SK-N-SH (cell line): ENCODE measurements at regions of chr18 and their contacts with region 1.

Region 1: GRCh38 chr18:46281185-46282176 is 177.3 kb downstream of the HAUS1 start:
- DNase-seq: peak; percentile 74
- H3K4me3 ChIP-seq: no peak overlapping the region; a peak in 1 of 4 replicates
- H3K27ac ChIP-seq: no peak overlapping the region
- H3K4me1 ChIP-seq: peaks cover 12 to 21% of the 10 kb centered on the region in 2 experiments; a peak in 2 of 4 replicates
- H3K27me3 ChIP-seq: no peaks in the 10 kb centered on the region
- CTCF ChIP-seq: peak; percentile 78
- EP300 ChIP-seq: no peak
- RAD21 ChIP-seq: peak; percentile 94

Region 2: GRCh38 chr18:46173393-46174341 is 107.8 kb before region 1 on chr18:
- CTCF ChIA-PET with region 1: interaction called, 52 read pairs
- POLR2A ChIA-PET with region 1: no interaction called
- DNase-seq: peak; percentile 95
- H3K4me3 ChIP-seq: peak overlapping the region; percentile 77 to 98
- H3K27ac ChIP-seq: peak overlapping the region; percentile 85 to 92
- H3K4me1 ChIP-seq: peaks cover 7 to 14% of the 10 kb centered on the region in 2 experiments; a peak in 2 of 4 replicates
- H3K27me3 ChIP-seq: no peaks in the 10 kb centered on the region
- CTCF ChIP-seq: peak; percentile 91
- EP300 ChIP-seq: peak; percentile 22 to 43; a peak in 2 of 4 replicates
- RAD21 ChIP-seq: peak; percentile 77

Region 3: DNA sequence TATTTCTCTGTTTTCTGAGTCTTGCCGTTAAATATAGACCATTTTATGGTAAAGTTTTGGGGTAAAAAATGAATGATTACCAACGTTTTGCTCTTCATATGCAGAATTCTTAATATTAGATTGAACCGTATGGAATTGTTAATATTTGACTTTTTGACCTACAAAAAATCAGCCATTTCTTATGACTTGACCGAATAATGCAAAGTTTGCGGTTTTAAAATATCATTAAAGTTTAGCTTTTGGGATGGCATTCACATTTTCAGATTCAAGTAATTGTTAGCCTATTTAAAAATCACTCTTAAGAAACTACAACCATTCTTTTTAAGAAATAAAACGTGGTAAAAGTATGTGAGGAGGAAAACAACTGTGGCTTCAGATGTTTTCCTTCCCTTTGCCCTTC is 39.3 kb before region 1 on chr18:
- CTCF ChIA-PET with region 1: no interaction called
- POLR2A ChIA-PET with region 1: no interaction called
- DNase-seq: no peak
- H3K4me3 ChIP-seq: no peak overlapping the region
- H3K27ac ChIP-seq: no peak overlapping the region
- H3K4me1 ChIP-seq: peaks cover 0 to 13% of the 10 kb centered on the region in 2 experiments; a peak in 2 of 4 replicates
- H3K27me3 ChIP-seq: no peaks in the 10 kb centered on the region
- CTCF ChIP-seq: no peak
- EP300 ChIP-seq: no peak
- RAD21 ChIP-seq: no peak

Region 4: GRCh38 chr18:46352520-46353250 is 71.2 kb after region 1 on chr18:
- CTCF ChIA-PET with region 1: interaction called, 12 read pairs
- POLR2A ChIA-PET with region 1: interaction called, 3 read pairs
- DNase-seq: no peak
- H3K4me3 ChIP-seq: no peak overlapping the region
- H3K27ac ChIP-seq: no peak overlapping the region
- H3K4me1 ChIP-seq: peaks cover 0 to 51% of the 10 kb centered on the region in 2 experiments; a peak in 2 of 4 replicates
- H3K27me3 ChIP-seq: no peaks in the 10 kb centered on the region
- CTCF ChIP-seq: no peak
- EP300 ChIP-seq: no peak
- RAD21 ChIP-seq: no peak

Region 5: GRCh38 chr18:46437061-46437460 is 155.6 kb after region 1 on chr18:
- CTCF ChIA-PET with region 1: interaction called, 11 read pairs
- POLR2A ChIA-PET with region 1: no interaction called
- DNase-seq: peak; percentile 85
- H3K4me3 ChIP-seq: no peak overlapping the region
- H3K27ac ChIP-seq: peak overlapping the region in 1 of 2 experiments; percentile 85; a peak in 2 of 4 replicates
- H3K4me1 ChIP-seq: peaks cover 0 to 38% of the 10 kb centered on the region in 2 experiments; a peak in 2 of 4 replicates
- H3K27me3 ChIP-seq: no peaks in the 10 kb centered on the region
- CTCF ChIP-seq: no peak
- EP300 ChIP-seq: no peak; a peak in 1 of 4 replicates
- RAD21 ChIP-seq: no peak

Region 6: DNA sequence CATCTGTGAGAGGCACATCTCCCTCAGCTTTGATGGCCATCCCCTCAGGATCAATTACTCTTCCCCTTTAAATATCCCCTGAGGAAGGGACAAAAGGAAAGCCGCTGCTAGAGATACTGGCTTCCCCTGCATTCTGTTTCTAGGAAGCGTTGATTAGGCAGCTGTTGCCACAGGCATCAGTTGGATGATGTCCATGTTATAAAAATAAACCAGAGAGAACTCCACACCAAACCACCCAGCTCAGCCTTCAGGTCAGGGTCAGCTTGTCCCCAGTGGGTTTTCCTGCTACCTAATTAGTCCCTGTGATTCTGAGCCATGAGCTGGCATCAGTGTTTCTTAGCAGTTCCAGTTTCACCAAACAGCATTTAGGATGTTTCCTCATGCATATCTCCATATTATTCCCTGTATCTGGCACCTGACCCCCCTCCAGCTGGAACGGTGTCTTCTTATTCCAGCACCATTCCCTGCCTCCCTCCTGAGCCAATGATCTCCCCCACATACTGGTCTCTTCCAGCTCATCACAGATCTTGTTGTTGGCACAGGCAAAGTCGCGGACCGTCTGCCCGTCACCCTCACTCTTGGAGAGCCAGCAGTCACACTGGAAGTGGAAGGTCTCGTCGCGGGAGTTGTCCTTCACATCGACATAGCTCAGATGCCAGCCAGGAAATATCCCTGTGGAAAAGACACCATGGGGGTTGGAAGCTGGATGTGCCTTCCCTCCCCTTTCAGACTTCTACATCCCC is 207.2 kb after region 1 on chr18:
- CTCF ChIA-PET with region 1: interaction called, 116 read pairs
- POLR2A ChIA-PET with region 1: no interaction called
- DNase-seq: no peak
- H3K4me3 ChIP-seq: no peak overlapping the region
- H3K27ac ChIP-seq: no peak overlapping the region
- H3K4me1 ChIP-seq: peaks cover 0 to 4% of the 10 kb centered on the region in 2 experiments; a peak in 1 of 4 replicates
- H3K27me3 ChIP-seq: no peaks in the 10 kb centered on the region; the same call in 1 of the 2 replicates
- CTCF ChIP-seq: no peak
- EP300 ChIP-seq: no peak
- RAD21 ChIP-seq: no peak

Region 7: DNA sequence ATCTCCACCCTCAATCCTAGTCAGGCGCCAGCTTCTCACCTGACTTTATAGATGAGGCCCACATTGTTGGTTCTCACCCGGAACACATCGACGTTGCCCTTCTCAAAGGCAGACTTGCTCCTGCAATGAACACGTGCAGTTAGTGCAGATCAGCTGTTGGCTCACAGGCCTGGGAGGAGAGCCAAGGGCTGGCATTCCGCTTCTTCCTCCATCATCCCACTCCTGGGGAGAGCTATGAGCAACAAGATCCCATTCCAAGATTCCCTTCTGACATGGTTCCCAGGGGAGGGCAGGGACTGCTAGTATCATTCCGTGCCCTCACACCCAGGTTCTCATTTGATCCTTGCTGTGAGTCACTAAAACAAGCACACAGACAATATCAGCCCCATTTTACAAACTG is 360.4 kb after region 1 on chr18:
- CTCF ChIA-PET with region 1: interaction called, 12 read pairs
- POLR2A ChIA-PET with region 1: no interaction called
- DNase-seq: no peak
- H3K4me3 ChIP-seq: no peak overlapping the region
- H3K27ac ChIP-seq: no peak overlapping the region
- H3K4me1 ChIP-seq: no peaks in the 10 kb centered on the region
- H3K27me3 ChIP-seq: peaks cover 29% of the 10 kb centered on the region; the same call in 1 of the 2 replicates
- CTCF ChIP-seq: no peak
- EP300 ChIP-seq: no peak
- RAD21 ChIP-seq: no peak